ENCODE measurements at regions of chr11 and their contacts with region 1.

Region 1: GRCh38 chr11:13335319-13335718 is 57.7 kb downstream of the BMAL1 start:
- DNase-seq: peak; percentile 83
- ATAC-seq: peak; percentile 54
- H3K4me3 Mint-ChIP-seq: no peak overlapping the region
- H3K27ac Mint-ChIP-seq: no peak overlapping the region
- H3K4me1 Mint-ChIP-seq: peaks cover 71% of the 10 kb centered on the region
- H3K27me3 Mint-ChIP-seq: no peaks in the 10 kb centered on the region

Region 2: DNA sequence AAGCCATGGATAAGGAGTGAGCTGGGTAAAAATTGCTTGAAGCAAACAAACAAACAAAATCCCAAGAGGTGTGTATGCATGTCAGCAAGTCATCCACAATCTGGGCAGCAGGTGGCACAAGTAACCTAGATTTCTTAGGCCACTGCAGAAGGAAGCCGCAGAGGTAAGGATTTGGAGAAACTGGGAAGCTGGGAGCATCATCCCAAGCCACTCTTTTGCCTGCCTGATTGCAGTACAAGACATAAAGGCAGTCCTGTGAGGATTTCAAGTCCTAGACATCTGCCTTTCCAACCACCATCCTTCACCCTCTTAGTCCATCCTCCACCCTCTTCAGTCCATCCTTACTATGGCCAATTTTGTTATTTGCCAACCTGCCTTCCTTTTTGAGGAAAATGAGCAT is 124.9 kb before region 1 on chr11:
- CTCF ChIA-PET with region 1: interaction called, 44 read pairs
- POLR2A ChIA-PET with region 1: interaction called, 3 read pairs
- DNase-seq: peak; percentile 57
- ATAC-seq: no peak
- H3K4me3 Mint-ChIP-seq: no peak overlapping the region
- H3K27ac Mint-ChIP-seq: no peak overlapping the region
- H3K4me1 Mint-ChIP-seq: peaks cover 30% of the 10 kb centered on the region
- H3K27me3 Mint-ChIP-seq: peaks cover 8% of the 10 kb centered on the region

Region 3: GRCh38 chr11:13238879-13239514 is 96.3 kb before region 1 on chr11:
- CTCF ChIA-PET with region 1: interaction called, 16 read pairs
- POLR2A ChIA-PET with region 1: interaction called, 5 read pairs
- DNase-seq: peak; percentile 70
- ATAC-seq: peak; percentile 87
- H3K4me3 Mint-ChIP-seq: no peak overlapping the region
- H3K27ac Mint-ChIP-seq: no peak overlapping the region
- H3K4me1 Mint-ChIP-seq: no peaks in the 10 kb centered on the region
- H3K27me3 Mint-ChIP-seq: peaks cover 25% of the 10 kb centered on the region

Region 4: GRCh38 chr11:13256216-13256615 is 79.1 kb before region 1 on chr11:
- CTCF ChIA-PET with region 1: interaction called, 47 read pairs
- POLR2A ChIA-PET with region 1: interaction called, 3 read pairs
- DNase-seq: no peak
- ATAC-seq: no peak
- H3K4me3 Mint-ChIP-seq: no peak overlapping the region
- H3K27ac Mint-ChIP-seq: no peak overlapping the region
- H3K4me1 Mint-ChIP-seq: peaks cover 10% of the 10 kb centered on the region
- H3K27me3 Mint-ChIP-seq: peaks cover 22% of the 10 kb centered on the region

Region 5: DNA sequence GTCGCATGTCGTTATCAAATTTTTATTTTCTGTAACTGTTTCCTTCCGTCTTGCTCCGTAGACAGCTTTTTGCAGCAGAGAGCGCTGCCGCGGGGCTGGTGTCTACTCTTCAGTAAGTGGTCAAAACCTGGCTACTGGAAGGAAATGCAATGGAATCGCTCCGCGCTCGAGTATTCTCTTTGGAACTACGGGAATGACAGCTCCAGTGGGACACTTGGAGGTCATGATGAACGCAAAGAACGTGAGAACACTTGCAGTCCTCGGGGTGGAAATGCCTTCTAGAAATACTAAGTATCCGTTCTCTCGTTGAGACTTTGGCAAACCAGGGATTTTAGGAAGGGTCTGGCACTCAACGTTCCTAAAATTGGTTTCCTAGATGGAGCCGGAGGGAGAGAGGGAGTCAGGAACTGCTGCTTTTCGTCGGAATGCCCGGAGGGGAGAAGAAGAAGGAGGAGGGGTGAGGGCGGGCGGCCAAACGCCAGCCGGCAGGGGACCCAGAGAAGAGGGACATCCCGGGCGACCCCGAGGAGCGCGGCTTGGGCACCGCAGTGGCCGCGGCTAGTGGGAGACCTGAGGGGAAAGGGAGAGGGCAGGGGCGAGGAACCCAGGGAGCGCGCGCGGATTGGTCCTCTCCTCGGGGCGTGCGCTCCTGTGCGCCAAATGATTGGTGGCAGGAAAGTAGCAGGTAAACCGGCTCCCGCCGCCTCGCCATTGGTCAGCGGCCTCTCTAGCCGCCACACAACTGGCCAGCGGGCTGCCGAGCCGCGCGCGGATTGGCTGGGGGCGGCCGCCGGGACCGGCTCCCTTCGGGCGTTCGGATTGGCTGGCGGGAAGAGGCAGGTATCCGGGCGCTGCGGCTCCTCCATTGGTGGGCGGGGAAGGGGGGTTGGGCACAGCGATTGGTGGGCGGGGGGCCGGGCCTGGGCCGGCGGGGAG is 58.2 kb before region 1 on chr11:
- CTCF ChIA-PET with region 1: interaction called, 52 read pairs
- POLR2A ChIA-PET with region 1: interaction called, 3 read pairs
- DNase-seq: peak; percentile 97
- ATAC-seq: peak; percentile 91
- H3K4me3 Mint-ChIP-seq: peak overlapping the region; percentile 94
- H3K27ac Mint-ChIP-seq: peak overlapping the region; percentile 82
- H3K4me1 Mint-ChIP-seq: peaks cover 47% of the 10 kb centered on the region
- H3K27me3 Mint-ChIP-seq: peaks cover 36% of the 10 kb centered on the region

Region 6: DNA sequence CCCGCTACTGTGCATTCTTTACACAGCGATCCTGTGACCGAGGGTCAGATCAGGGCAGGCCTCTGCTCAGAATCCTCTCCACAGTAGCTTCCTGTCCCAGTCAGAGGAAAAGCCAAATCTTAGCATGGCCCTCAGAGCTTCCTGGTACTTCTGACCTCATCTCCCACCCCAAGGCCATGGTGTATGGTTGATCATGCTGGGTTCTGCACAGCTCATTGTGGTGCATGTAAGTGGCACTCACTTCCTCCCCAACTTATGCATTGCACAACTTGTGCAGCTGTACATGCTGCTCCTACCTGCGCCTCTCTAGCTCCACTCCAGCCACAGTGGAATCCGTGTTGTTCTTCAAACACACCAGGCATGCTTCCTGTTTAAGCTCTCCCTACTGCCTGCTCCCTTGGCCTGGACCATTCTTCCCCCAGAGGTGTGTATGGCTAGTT is 37.4 kb before region 1 on chr11:
- CTCF ChIA-PET with region 1: interaction called, 17 read pairs
- POLR2A ChIA-PET with region 1: interaction called, 9 read pairs
- DNase-seq: peak; percentile 79
- ATAC-seq: peak; percentile 94
- H3K4me3 Mint-ChIP-seq: peak overlapping the region; percentile 36
- H3K27ac Mint-ChIP-seq: peak overlapping the region; percentile 89
- H3K4me1 Mint-ChIP-seq: peaks cover 82% of the 10 kb centered on the region
- H3K27me3 Mint-ChIP-seq: no peaks in the 10 kb centered on the region

Region 7: DNA sequence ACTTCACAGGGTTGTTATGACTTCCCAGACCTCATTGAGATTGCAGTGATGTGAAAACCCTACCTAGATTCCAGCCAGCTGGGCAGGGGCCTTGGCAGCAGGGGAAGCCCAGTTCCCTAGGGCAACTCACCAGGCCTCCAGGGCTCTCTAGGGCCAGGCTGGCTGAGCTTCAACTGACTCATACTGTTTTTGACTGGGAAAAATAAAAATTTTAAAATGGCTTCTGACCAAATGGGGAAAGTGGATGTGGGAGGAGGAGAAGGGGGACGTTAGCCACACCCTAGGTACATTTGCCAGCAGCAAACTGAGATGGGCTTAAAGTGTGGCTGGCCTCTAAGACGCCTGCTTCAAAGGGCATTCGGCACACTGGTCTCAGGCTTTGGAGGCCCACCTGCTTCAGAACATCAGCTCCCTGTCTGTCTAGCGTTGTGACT is 18.8 kb before region 1 on chr11:
- CTCF ChIA-PET with region 1: interaction called, 34 read pairs
- POLR2A ChIA-PET with region 1: no interaction called
- DNase-seq: no peak
- ATAC-seq: no peak
- H3K4me3 Mint-ChIP-seq: no peak overlapping the region
- H3K27ac Mint-ChIP-seq: no peak overlapping the region
- H3K4me1 Mint-ChIP-seq: peaks cover 61% of the 10 kb centered on the region
- H3K27me3 Mint-ChIP-seq: no peaks in the 10 kb centered on the region

Measured in activated CD8-positive, alpha-beta T cell treated with anti-CD3 and anti-CD28 coated beads, Interleukin-2, amount 10 ng/mL, durations not matched to agents 7 days and 5 days (primary cell).